Right ventricle myocardium inferior (tissue), 1 donor: ENCODE measurements at regions of chr5 and their contacts with region 1.

Region 1: DNA sequence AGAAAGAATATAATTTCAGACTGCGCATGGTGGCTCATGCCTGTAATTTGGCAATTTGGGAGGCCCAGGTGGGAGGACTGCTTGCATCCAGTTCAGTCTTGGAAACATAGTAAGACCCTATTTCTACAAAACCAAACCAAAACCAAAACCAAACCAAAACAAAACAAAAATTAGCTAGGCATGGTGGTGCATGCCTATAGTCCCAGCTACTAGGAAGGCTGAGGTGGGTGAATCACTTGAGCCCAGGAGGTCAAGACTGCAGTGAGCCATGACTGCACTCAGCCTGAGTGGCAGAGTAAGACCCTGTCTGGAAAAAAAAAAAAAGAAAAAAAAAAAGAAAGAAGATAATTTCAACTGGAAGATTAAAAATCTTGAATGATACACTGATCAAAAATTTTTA is 137.0 kb upstream of the ACOT12 start:
- DNase-seq: no peak
- ATAC-seq: no peak

Region 2: GRCh38 chr5:81334304-81335061 is 196.4 kb before region 1 on chr5:
- intact Hi-C with region 1: no loop called
- DNase-seq: no peak
- ATAC-seq: peak; percentile 59

Region 3: GRCh38 chr5:81545911-81546310 is 15.0 kb after region 1 on chr5:
- intact Hi-C with region 1: loop called (anchors 1 kb)
- DNase-seq: no peak
- ATAC-seq: no peak